HCT116 (cell line): ENCODE measurements at regions of chr10 and their contacts with region 1.

Region 1: DNA sequence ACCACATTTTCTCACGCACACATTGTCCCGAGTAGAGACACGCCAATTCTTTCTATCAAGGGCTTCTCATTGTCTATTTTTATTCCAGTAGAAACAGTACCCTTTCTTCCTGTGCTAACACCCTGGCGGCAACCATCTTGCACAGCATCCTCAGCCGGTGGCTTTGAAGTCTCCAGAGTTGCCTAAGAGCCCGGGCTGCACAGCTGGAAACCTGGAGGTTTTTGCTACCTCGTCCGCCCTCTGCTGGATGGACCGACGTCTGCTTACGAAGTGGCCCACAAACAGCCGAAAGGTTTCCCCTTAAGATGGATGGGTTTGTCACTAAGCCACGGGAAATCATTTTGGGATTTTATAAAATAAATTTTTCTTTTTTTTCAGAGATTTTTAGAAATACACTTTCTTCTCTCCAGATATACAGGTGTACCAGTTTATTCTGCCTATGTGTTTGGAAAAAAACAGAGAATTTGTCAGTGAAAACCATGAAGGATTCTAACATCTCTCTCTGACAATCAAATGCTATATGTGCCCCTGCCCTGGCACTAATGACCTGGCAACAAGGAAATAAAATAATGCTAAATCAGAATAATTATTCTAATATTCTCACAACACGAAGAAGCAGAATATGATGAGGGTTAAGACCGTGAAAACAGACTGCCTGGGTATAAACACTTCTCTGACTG is 81.8 kb upstream of the FAM204A start:
- DNase-seq: peak; percentile 98
- ATAC-seq: peak; percentile 97
- H3K4me3 ChIP-seq: no peak overlapping the region; a peak in 1 of 4 replicates
- H3K27ac ChIP-seq: no peak overlapping the region
- H3K4me1 ChIP-seq: peaks cover 2 to 5% of the 10 kb centered on the region in 2 experiments; a peak in 3 of 4 replicates
- H3K27me3 ChIP-seq: 0 out of 2 replicates have a peak, but pooled peaks cover 7% of the 10 kb centered on the region
- CTCF ChIP-seq: peak; percentile 89 to 98 (median 89)
- POLR2A ChIP-seq: no peak
- RAD21 ChIP-seq: peak; percentile 88

Region 2: DNA sequence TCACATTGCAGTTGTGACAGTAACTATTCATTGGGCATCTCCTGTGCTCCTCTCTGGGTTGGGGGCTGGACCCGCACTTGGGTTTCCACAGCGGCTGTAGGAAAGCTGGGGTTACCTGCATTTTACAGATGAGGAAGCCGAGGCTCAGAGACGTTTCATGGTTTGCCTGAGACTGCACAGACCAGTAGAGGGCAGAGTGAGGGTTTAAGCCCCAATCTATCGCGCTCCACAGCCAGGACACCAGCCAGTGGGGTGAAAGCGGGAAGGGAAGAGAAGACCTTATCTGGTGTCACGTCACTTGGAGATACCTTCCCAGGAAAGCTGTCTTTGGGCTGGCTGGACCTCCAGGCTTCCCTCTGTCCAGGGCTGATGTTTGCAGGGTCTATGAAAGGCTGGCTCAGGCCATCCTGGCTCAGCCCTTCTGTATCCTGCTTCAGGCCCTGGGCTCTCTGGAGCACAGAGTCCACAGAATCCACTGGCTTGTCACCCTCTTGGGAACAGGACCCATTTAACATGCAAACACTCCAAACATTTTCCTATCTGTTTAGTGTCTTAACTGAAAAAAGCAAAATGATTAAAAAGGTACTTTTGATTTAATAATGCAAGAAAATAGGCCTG is 713.6 kb before region 1 on chr10:
- CTCF ChIA-PET with region 1: no interaction called
- POLR2A ChIA-PET with region 1: no interaction called
- RAD21 ChIA-PET with region 1: no interaction called
- intact Hi-C with region 1: loop called (anchors 10 kb)
- DNase-seq: no peak
- ATAC-seq: peak; percentile 92
- H3K4me3 ChIP-seq: no peak overlapping the region
- H3K27ac ChIP-seq: no peak overlapping the region
- H3K4me1 ChIP-seq: no peaks in the 10 kb centered on the region
- H3K27me3 ChIP-seq: peaks cover 10% of the 10 kb centered on the region
- CTCF ChIP-seq: peak; percentile 26 to 63 (median 56); a peak in 5 of 6 replicates
- POLR2A ChIP-seq: no peak
- RAD21 ChIP-seq: peak; percentile 46

Region 3: GRCh38 chr10:118341791-118342637 is 81.9 kb before region 1 on chr10 and contains the start of gene FAM204A:
- CTCF ChIA-PET with region 1: no interaction called
- POLR2A ChIA-PET with region 1: no interaction called
- RAD21 ChIA-PET with region 1: no interaction called
- intact Hi-C with region 1: loop called (anchors 2 kb)
- DNase-seq: peak; percentile 93
- ATAC-seq: peak; percentile 96
- H3K4me3 ChIP-seq: peak within 1 kb of the TSS; percentile 85 to 86
- H3K27ac ChIP-seq: peak within 1 kb of the TSS; percentile 55
- H3K4me1 ChIP-seq: peaks cover 6 to 15% of the 10 kb centered on the region in 2 experiments
- H3K27me3 ChIP-seq: no peaks in the 10 kb centered on the region
- CTCF ChIP-seq: no peak
- POLR2A ChIP-seq: peak; percentile 80
- RAD21 ChIP-seq: no peak
- total RNA-seq, gene FAM204A: 79.5 TPM

Region 4: DNA sequence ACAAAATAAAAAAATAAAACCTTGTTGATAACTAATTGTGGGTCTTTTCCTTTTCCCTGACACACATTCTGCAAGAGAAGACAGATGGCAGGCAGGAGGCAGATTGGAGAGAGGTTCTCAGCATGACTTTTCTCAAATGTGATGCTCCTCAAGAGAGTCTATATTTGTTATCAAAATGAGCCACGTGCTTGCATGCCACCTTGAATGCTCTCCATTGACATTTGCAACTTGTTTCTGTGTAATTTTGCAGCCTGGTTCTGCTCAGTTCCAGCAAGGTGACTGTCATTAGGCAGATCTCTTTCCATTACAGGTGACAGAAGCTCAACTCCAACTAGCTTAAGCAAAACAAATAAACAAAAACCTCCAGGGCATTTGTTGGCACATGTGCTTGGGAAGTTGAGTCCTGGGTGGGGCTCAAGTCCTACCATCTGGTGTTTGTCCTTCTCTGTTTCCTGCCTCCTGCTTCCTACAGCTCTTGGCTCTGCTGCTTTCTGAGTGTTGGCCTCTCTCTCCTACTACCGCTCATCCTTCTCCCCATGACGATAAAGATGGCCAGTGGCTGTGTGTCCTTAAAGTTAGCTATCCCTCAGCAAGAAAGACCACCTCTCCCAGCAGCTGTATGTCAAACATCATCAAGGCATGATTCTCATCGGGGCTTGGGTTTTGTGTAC is 840.1 kb after region 1 on chr10:
- CTCF ChIA-PET with region 1: no interaction called
- POLR2A ChIA-PET with region 1: no interaction called
- RAD21 ChIA-PET with region 1: no interaction called
- intact Hi-C with region 1: no loop called
- DNase-seq: no peak
- ATAC-seq: no peak
- H3K4me3 ChIP-seq: no peak overlapping the region
- H3K27ac ChIP-seq: no peak overlapping the region
- H3K4me1 ChIP-seq: peaks cover 19 to 41% of the 10 kb centered on the region in 2 experiments
- H3K27me3 ChIP-seq: no peaks in the 10 kb centered on the region
- CTCF ChIP-seq: no peak
- POLR2A ChIP-seq: no peak
- RAD21 ChIP-seq: no peak